ENCODE measurements at regions of chr11 and their contacts with region 1.

Region 1: GRCh38 chr11:118295834-118296454 is 8.6 kb upstream of the CD3E start:
- DNase-seq: no peak
- ATAC-seq: peak; percentile 73
- H3K4me3 Mint-ChIP-seq: no peak overlapping the region
- H3K27ac Mint-ChIP-seq: no peak overlapping the region
- H3K4me1 Mint-ChIP-seq: peaks cover 7% of the 10 kb centered on the region; the same call in 1 of the 2 replicates
- H3K27me3 Mint-ChIP-seq: peaks cover 16% of the 10 kb centered on the region
- CTCF ChIP-seq: no peak

Region 2: DNA sequence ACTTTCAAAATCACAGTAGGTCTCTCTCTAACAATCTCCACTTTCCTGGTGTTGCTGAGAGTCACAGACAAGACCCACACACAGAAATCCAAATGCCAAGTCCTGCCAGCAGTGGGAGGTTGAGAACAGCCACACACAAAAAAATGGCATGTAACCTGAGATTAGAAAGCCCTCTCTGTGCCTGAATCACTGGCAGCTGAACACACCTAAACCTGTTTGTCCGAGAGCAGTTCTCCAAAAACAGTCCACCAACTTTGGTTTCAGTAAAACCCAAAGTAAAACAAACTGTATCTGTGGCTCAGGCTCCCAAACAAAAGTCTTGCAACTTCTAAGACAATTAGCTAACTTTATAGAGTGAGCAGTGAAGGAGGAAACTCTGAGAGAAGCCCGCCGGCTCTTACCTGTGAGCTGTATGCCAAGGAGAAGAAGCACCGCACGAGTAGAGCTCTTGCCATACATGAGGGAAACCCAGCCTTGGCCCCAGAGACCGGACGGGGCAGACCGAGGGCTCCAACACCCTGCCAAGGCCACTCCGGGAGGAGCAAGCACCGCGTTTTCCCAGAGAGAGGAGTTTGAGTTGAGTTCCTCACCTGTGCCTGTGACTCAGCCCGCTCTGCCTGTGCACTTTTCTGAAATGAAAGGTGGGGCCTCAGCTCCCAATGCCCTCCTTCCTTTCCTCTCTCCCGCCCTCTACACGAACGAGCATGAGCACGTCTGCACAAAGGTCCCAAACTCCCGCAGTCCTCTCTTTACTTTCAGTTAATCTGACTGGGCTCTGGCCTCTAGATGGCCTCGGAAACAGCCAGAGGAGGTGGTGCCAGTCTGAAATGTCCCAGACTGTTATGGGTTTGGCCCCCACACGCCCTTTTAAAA is 32.0 kb before region 1 on chr11 and contains the start of gene MPZL2:
- CTCF ChIA-PET with region 1: interaction called, 10 read pairs
- POLR2A ChIA-PET with region 1: no interaction called
- DNase-seq: peak; percentile 42
- ATAC-seq: peak; percentile 85
- H3K4me3 Mint-ChIP-seq: peak within 1 kb of the TSS; percentile 67
- H3K27ac Mint-ChIP-seq: no peak within 1 kb of the TSS
- H3K4me1 Mint-ChIP-seq: peaks cover 35% of the 10 kb centered on the region
- H3K27me3 Mint-ChIP-seq: peaks cover 93% of the 10 kb centered on the region
- CTCF ChIP-seq: no peak
- total RNA-seq, gene MPZL2: 1.2 to 1.8 TPM (median 1.4 TPM) in 3 replicates

Region 3: GRCh38 chr11:118311518-118311917 is 15.6 kb after region 1 on chr11:
- CTCF ChIA-PET with region 1: interaction called, 14 read pairs
- POLR2A ChIA-PET with region 1: no interaction called
- DNase-seq: no peak
- ATAC-seq: no peak
- H3K4me3 Mint-ChIP-seq: no peak overlapping the region
- H3K27ac Mint-ChIP-seq: no peak overlapping the region
- H3K4me1 Mint-ChIP-seq: peaks cover 24% of the 10 kb centered on the region
- H3K27me3 Mint-ChIP-seq: peaks cover 16% of the 10 kb centered on the region
- CTCF ChIP-seq: no peak